ENCODE measurements at regions of chr12 and their contacts with region 1.

Region 1: DNA sequence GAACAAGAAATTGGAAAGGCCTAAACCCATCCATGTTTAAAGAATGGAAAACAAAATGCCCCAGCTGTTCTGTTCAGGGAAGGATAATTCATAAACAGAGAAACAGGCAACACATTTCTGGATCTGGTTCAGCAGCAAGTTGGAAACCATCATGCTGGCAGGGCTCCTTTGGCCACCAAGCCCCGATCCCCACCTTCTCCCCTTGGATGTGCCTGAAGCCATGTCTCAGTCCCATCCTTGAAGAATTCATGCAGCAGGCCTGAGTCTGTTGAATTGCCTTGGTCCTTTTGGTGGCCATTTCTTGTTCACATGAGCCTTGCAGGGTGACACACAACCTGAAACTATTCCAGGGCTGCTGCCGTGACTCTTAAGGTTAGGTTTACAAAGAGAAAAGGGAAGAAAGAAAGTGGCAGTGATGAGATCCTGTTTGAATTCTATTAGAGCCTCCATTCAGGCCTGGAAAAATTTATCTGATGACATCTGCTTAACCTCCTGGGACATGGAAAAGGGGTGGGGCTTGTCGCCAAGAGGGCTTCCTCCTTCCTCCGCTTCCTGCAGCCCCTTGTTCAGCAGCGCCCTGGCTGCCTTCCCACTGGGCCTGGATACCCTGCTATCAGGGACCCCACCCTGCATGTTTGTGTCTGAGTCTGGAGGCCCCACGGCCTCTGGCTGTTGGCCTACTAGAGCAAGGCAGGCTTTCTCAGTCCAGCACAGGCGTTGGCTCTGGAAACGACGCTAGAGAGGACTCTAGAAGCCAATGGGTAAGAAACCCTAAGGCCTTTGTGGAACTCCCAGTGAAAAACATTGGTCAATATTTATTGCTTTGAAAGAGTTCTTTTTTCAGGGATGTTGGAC is 341.9 kb downstream of the C12orf75 start:
- DNase-seq: peak; percentile 89
- ATAC-seq: peak; percentile 87

Region 2: DNA sequence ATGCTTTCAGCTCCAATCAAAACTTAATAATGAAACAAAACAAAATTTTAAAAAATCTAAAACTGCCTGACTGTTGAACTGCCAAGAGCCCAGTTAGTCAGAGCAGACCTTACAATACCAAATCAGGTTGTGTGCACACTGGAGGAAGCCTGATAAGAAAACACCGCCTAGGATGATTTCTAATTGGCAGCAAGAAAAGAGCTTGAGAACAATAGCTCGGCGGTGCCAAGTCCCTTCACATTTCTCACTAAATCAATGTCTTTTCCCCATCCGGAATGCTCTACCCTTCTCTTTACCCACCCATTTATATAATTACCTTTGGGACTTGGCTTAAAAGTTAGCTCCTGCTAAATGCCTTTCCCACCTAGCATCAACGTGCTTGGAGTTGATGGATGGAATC is 85.1 kb before region 1 on chr12:
- intact Hi-C with region 1: loop called (anchors 5 kb)
- DNase-seq: no peak
- ATAC-seq: no peak

Region 3: DNA sequence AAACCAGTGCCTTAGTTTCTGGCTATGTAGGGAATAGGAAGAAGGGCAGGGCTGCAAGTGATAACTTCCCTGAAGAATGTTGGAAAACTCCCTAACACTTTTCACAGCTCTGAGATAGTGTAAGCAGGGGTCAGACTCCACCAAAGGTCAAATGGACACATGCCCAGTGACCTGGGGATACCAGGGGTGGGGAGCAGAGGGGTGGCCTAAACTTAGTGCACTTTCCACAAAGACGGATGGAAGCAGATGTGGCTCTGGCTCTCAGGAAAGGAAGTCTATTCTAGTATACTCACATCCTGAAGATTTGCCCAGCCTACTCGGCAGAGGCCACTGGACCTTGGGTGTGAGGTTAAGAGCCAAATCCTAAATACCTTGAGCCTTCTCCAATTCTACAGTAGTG is 180.6 kb after region 1 on chr12:
- intact Hi-C with region 1: no loop called
- DNase-seq: no peak
- ATAC-seq: peak; percentile 84

Measured in Right ventricle myocardium inferior (tissue), 1 donor.